ENCODE measurements at regions of chr6 and their contacts with region 1.

Region 1: GRCh38 chr6:41767156-41767833 is 12.4 kb downstream of the FRS3 start:
- DNase-seq: peak; percentile 68 to 85 (median 76)
- ATAC-seq: peak; percentile 88
- H3K4me3 ChIP-seq: no peak overlapping the region
- H3K27ac ChIP-seq: peak overlapping the region; percentile 5; the same call in 2 of the 3 replicates
- H3K4me1 ChIP-seq: peaks cover 33 to 37% of the 10 kb centered on the region in 2 experiments
- H3K27me3 ChIP-seq: peaks cover 0 to 10% of the 10 kb centered on the region in 2 experiments; a peak in 2 of 5 replicates
- CTCF ChIP-seq: no peak
- EP300 ChIP-seq: peak; percentile 56; the same call in 1 of the 2 replicates
- POLR2A ChIP-seq: no peak
- RAD21 ChIP-seq: no peak

Region 2: DNA sequence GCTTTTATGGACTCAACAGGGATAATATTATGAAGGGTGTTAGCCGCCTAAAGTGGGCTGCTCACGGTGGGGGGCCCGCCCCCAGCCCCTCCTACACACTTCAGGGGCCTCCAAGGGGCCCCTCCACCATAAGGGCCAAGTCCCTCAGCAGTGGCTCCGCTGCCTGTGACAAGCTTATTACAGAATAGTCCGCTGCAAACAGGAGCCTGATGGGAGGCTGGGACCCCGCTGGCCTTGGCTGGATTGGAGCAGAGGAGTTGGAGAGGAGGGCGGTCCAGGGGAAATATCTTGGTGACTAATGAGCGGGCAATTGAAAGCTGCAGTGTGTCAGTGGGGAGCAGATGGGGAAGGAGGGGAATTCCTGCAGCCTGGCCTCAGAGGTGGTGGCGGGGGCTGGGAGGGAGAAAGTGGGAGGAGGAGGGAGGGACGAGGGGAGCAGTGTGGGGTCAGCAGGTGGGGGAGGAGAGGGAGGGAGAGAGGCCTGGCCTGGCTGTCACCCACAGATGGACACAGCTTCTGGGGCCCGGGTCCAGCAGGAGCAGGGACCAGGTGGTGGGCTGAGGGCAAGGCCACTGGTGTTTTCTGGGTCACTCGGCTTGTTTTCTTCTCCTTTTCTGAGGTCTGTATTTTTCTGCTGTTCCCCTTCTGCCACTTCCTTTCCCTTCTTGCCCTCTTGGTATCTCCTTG is 278.7 kb before region 1 on chr6:
- CTCF ChIA-PET with region 1: no interaction called
- POLR2A ChIA-PET with region 1: no interaction called
- in situ Hi-C with region 1: no loop called
- intact Hi-C with region 1: no loop called
- DNase-seq: no peak
- ATAC-seq: no peak; the same call in 2 of the 3 replicates
- H3K4me3 ChIP-seq: no peak overlapping the region
- H3K27ac ChIP-seq: no peak overlapping the region
- H3K4me1 ChIP-seq: peaks cover 0 to 3% of the 10 kb centered on the region in 2 experiments; a peak in 1 of 5 replicates
- H3K27me3 ChIP-seq: peaks cover 55 to 71% of the 10 kb centered on the region in 2 experiments
- CTCF ChIP-seq: no peak
- EP300 ChIP-seq: no peak
- POLR2A ChIP-seq: no peak
- RAD21 ChIP-seq: no peak

Region 3: DNA sequence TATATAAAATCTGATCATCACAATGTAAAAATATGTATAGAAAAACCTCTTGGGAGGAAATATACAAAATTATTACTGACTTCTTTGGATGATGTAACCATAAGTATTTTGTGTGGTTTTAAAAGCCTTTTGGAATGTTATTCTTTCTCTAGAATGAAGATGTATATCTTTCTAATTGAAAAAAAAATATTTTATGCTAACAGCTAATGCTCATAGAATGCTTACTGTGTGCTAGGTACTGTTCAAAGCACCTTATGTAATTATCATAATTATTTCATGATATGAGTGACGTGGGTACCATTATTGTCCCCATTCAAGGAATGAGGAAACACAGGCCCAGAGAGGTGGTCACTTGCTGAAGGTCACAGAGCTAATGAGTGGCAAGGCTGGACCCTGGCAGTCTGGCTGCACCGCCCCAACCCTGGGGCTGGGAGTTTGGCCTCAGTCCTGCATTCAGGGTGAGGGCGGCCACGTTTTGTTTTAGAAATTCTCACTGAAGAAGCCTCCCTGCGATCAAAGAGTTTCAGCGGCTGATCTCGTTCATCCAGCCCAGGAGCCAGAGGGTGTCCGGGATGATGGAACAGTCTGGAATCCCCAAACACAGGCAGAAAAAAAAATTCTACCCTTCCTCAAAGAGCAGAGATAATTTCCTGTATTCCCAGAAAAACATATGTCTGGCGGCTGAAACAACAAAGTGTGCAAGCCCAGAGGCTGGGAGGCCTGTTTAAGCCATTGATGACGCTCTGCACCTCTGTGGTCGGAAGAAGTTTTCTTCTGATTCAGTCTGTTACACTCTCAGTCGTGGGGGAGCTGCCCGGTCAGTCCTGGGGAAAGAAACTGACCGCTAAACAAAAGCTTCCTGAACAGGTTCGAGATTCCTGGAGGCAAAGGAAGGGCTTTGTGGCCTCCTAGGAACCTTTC is 69.2 kb before region 1 on chr6:
- CTCF ChIA-PET with region 1: no interaction called
- POLR2A ChIA-PET with region 1: no interaction called
- in situ Hi-C with region 1: loop called (anchors 5 kb)
- intact Hi-C with region 1: no loop called
- DNase-seq: no peak
- ATAC-seq: 0 out of 3 replicates have a peak, but pooled peaks have one; percentile 17
- H3K4me3 ChIP-seq: no peak overlapping the region
- H3K27ac ChIP-seq: no peak overlapping the region
- H3K4me1 ChIP-seq: 0 out of 5 replicates have a peak, but pooled peaks cover 0 to 3% of the 10 kb centered on the region in 2 experiments
- H3K27me3 ChIP-seq: peaks cover 0 to 24% of the 10 kb centered on the region in 2 experiments; a peak in 2 of 5 replicates
- CTCF ChIP-seq: no peak
- EP300 ChIP-seq: no peak
- POLR2A ChIP-seq: no peak
- RAD21 ChIP-seq: no peak

Region 4: GRCh38 chr6:41735427-41736356 is 31.6 kb before region 1 on chr6 and contains the start of gene TFEB:
- CTCF ChIA-PET with region 1: no interaction called
- POLR2A ChIA-PET with region 1: interaction called, 4 read pairs
- in situ Hi-C with region 1: loop called (anchors 5 kb)
- intact Hi-C with region 1: loop called (anchors 2 kb)
- DNase-seq: peak; percentile 95 to 98 (median 97)
- ATAC-seq: peak; percentile 89
- H3K4me3 ChIP-seq: peak within 1 kb of the TSS; percentile 63
- H3K27ac ChIP-seq: no peak within 1 kb of the TSS
- H3K4me1 ChIP-seq: peaks cover 5 to 29% of the 10 kb centered on the region in 2 experiments
- H3K27me3 ChIP-seq: peaks cover 11 to 33% of the 10 kb centered on the region in 2 experiments; a peak in 3 of 5 replicates
- CTCF ChIP-seq: peak; percentile 91 to 97 (median 94)
- EP300 ChIP-seq: 0 out of 2 replicates have a peak, but pooled peaks have one; percentile 24
- POLR2A ChIP-seq: no peak
- RAD21 ChIP-seq: peak; percentile 78 to 82
- polyA plus RNA-seq, gene TFEB: 0.04 to 0.07 TPM